ENCODE measurements at regions of chr6 and their contacts with region 1.

Region 1: DNA sequence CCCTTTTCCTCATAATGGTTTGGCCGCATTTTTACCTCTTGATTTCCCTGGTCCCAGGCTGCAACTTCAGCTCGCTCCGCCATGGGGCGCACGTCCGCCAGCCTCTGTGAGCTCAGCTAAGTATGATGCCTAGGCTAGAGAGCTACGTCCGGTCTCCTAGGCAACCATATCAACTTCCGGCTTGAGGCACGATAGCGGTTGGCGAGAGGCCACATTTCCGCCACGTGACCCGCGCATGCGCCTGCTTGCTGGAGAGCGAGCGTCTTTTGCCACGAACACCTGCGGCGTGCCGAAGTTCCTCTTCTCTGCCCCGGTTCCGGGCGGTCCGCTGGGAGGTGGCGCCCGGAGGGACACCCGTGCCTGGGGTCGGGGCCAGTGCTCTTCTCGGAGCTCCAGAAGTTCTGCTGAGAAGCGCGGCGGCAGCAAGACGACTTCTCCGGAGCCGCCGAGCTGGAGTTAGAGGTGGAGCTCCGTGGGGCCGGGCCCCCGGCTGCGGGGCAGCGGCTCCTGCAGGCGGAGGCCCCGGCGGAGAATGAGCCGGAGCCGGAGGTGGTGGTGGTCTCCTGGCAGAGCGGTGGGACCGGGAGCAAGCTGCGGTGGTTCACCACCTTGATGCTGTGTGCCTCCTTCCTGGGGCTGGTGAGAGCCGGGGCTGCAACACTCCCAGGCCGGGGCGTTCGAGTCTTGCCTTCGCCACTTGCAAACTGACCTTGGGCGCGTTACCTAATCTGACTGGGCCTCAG is 172.0 kb downstream of the SLC16A10 start:
- H3K4me3 ChIP-seq: peak overlapping the region; percentile 82
- H3K27ac ChIP-seq: peak overlapping the region; percentile 58
- H3K4me1 ChIP-seq: no peaks in the 10 kb centered on the region
- CTCF ChIP-seq: peak; percentile 95

Region 2: DNA sequence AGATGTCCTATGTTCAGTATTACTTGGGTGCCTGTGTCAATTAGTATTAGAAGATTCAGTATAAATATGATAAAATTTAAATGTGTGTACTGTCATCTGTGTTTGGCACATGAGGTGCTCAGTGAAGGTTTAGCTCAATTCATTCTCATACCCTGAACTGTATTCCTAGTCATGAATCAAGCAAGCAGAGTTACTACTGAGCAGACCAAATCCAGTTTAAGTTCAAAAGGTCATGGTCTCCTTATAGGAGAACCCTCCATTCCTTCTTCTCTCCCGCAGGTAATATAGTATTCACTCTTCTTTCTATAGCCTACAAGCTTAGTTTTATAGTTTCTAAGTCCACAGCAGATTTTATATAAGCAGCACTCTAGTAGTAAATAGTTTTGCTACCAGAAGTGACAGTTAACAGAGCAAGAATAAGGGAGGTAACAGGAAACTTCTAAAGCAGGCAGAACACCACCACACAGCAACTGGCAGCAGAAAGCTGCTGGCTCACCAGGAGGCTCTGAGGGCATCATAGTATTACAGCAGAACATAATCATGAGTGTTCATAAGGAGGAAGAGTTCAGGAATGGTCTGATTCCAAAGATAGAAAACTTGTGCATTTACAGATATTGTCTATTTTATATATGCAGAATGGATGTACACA is 38.8 kb before region 1 on chr6:
- CTCF ChIA-PET with region 1: no interaction called
- POLR2A ChIA-PET with region 1: no interaction called
- H3K4me3 ChIP-seq: no peak overlapping the region
- H3K27ac ChIP-seq: no peak overlapping the region
- H3K4me1 ChIP-seq: no peaks in the 10 kb centered on the region
- CTCF ChIP-seq: no peak

Region 3: GRCh38 chr6:111406200-111406721 is 147.0 kb after region 1 on chr6:
- CTCF ChIA-PET with region 1: no interaction called
- POLR2A ChIA-PET with region 1: no interaction called
- H3K4me3 ChIP-seq: no peak overlapping the region
- H3K27ac ChIP-seq: no peak overlapping the region
- H3K4me1 ChIP-seq: no peaks in the 10 kb centered on the region
- CTCF ChIP-seq: no peak

Region 4: GRCh38 chr6:111478749-111479148 is 219.5 kb after region 1 on chr6:
- CTCF ChIA-PET with region 1: interaction called, 26 read pairs
- POLR2A ChIA-PET with region 1: interaction called, 17 read pairs
- H3K4me3 ChIP-seq: no peak overlapping the region
- H3K27ac ChIP-seq: no peak overlapping the region
- H3K4me1 ChIP-seq: peaks cover 19% of the 10 kb centered on the region
- CTCF ChIP-seq: no peak

Region 5: DNA sequence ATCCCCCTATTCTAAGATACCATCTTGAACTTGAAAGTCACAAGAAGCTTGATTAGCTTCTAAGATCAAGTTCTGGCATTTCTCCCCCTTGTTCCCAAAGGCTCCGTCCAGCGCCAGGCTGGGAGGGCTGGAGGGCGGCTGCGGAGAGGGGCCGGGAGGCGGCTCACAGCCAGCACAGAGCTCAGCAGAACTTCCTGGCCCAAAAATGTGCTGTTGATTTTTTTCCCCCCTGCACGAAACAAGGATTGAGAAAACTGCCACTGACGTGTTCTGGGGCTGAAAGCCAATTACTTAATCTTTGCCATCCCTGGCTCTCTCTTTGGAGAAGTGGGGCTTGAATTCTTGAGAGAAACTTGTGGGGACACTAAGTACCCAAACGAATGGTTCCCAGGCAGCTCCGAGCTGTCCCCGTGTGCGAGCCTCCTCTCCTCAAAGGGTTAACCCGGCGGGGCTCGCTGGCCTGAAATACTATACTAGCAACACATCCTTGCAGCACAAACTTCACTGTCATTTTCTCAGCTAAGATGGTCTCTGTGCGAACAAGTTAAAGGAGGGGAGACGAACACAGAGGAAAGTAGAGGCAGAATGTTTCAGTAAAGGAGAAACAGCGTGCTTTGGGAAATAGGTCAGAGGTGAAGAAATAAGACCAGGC is 346.0 kb after region 1 on chr6:
- CTCF ChIA-PET with region 1: interaction called, 8 read pairs
- POLR2A ChIA-PET with region 1: interaction called, 10 read pairs
- H3K4me3 ChIP-seq: peak overlapping the region; percentile 61
- H3K27ac ChIP-seq: peak overlapping the region; percentile 79
- H3K4me1 ChIP-seq: peaks cover 25% of the 10 kb centered on the region
- CTCF ChIP-seq: no peak

Region 6: GRCh38 chr6:111703723-111704122 is 444.5 kb after region 1 on chr6:
- CTCF ChIA-PET with region 1: interaction called, 10 read pairs
- POLR2A ChIA-PET with region 1: no interaction called
- H3K4me3 ChIP-seq: no peak overlapping the region
- H3K27ac ChIP-seq: no peak overlapping the region
- H3K4me1 ChIP-seq: no peaks in the 10 kb centered on the region
- CTCF ChIP-seq: no peak